Transverse colon (tissue), 4 donors: ENCODE measurements at regions of chr13 and their contacts with region 1.

Region 1: DNA sequence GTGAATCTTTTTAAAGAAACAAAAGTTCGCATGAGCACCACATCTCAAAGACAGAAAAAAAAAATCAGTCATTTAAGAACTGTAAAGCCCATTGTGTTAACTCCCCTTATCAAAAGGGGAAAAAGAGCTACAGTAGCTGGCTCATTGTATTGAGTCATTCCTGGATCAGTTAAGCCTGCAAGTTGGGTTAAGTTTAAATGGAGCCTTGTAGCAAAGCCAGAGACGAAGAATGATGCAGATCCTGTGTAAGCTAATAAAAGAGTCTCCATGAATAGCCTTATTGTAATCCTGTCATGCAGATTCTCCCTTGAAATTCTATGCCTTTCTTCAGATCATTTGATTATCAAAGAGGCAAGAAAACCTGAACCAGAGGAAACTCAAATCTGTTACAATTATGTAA is 83.8 kb downstream of the CRYL1 start:
- DNase-seq: no peak
- H3K4me3 ChIP-seq: no peak overlapping the region
- H3K27ac ChIP-seq: peak overlapping the region in 1 of 4 donors; percentile 36
- H3K4me1 ChIP-seq: peaks cover 0 to 20% (median 7%) of the 10 kb centered on the region in 4 donors
- H3K27me3 ChIP-seq: no peaks in the 10 kb centered on the region
- CTCF ChIP-seq: no peak
- EP300 ChIP-seq: no peak
- POLR2A ChIP-seq: no peak

Region 2: DNA sequence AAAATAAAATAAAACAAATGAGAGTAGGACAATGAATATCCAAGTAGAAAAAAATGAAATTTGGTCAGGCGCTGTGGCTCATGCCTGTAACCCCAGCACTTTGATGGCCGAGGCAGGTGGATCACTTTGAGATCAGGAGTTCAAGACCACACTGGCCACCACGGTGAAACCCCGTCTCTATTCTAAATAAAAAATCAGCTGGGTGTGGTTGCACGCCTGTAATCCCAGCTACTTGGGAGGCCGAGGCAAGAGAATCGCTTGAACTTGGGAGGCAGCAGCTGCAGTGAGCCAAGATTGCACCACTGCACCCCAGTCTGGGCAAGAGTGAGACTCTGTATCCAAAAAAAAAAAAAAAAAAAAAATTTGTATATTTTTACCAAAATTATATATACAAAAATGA is 560.2 kb before region 1 on chr13:
- in situ Hi-C with region 1: no loop called
- intact Hi-C with region 1: no loop called
- DNase-seq: no peak
- H3K4me3 ChIP-seq: no peak overlapping the region
- H3K27ac ChIP-seq: no peak overlapping the region
- H3K4me1 ChIP-seq: no peaks in the 10 kb centered on the region
- H3K27me3 ChIP-seq: no peaks in the 10 kb centered on the region
- CTCF ChIP-seq: no peak
- EP300 ChIP-seq: no peak
- POLR2A ChIP-seq: no peak

Region 3: DNA sequence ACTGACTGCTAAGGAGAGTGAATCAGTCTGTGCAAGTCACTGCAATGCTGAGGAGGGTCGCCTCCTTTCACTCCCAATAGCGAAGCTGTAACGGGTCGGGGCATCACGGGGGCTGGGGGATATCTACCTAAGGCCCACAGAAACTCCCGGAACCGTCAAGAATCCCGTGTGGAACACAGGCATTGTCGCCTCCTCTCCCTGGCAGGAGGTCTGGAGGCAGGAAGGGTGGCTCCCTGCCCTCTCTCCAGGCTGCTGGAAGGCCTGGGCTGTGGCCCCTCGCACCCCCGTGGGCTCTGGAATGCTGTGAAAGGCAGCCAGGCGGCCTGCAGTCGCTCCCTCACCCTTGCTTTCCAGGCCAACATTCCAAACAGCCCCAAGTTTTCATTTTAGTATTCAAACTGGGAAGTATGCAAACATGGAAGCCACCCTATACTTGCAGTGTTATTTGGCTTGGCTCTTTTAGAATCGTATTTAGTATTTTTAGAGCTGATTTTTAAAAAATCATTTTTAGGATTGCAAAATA is 25.6 kb before region 1 on chr13:
- in situ Hi-C with region 1: no loop called
- intact Hi-C with region 1: loop called (anchors 1 kb)
- DNase-seq: no peak
- H3K4me3 ChIP-seq: no peak overlapping the region
- H3K27ac ChIP-seq: no peak overlapping the region
- H3K4me1 ChIP-seq: peaks cover 0 to 4% (median 3%) of the 10 kb centered on the region in 4 donors
- H3K27me3 ChIP-seq: no peaks in the 10 kb centered on the region
- CTCF ChIP-seq: no peak
- EP300 ChIP-seq: no peak
- POLR2A ChIP-seq: no peak